Colonic mucosa (tissue), 4 donors: ENCODE measurements at regions of chr18 and their contacts with region 1.

Region 1: DNA sequence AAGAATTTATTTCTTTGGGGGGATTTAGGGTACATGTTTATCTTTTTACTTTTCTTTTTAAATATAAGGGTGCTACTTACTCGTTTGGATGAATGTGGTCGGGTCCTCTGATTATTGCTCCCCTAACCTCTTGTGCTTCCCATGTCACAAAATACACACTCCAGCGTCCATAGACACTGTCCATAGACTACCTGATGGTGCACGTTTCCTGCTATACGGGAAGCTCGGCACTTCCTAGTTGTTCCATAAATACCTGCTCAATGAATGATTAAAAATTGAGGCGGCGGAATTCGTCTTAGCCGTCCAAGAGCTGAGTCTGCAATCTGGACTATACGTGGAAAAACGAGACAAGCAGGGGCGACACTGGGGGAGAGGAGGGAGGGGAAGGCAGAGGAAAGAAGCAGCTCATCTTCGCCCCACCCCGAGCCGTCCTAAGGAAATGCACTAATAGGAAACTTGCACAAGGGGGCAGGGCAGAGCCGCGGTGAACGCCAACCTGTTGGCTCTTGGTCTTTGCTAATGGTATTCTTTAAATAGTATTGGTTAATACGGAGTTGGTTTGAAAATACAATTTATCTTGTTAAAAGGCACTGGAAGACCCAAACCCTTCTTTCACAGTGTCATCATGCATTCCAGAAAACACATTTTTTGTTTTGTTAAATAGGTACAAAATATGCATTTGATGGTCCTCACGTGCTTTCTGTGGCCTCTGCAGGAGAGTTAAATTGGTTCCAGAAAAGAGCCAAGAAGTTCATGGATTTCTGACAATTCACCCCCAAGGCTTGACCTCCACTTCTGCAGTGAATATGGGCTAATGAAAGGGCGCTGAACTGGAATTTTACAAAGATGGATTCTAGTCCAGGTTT is 73.0 kb upstream of the KCTD1 start:
- DNase-seq: peak; percentile 63
- H3K4me3 ChIP-seq: no peak overlapping the region
- H3K27ac ChIP-seq: no peak overlapping the region
- H3K4me1 ChIP-seq: no peaks in the 10 kb centered on the region
- H3K27me3 ChIP-seq: no peaks in the 10 kb centered on the region
- CTCF ChIP-seq: peak; percentile 65

Region 2: GRCh38 chr18:26771524-26771923 is 150.1 kb after region 1 on chr18:
- intact Hi-C with region 1: loop called (anchors 5 kb)
- DNase-seq: no peak
- H3K4me3 ChIP-seq: no peak overlapping the region
- H3K27ac ChIP-seq: no peak overlapping the region
- H3K4me1 ChIP-seq: no peaks in the 10 kb centered on the region
- H3K27me3 ChIP-seq: no peaks in the 10 kb centered on the region
- CTCF ChIP-seq: no peak